ENCODE measurements at regions of chr11 and their contacts with region 1.

Region 1: DNA sequence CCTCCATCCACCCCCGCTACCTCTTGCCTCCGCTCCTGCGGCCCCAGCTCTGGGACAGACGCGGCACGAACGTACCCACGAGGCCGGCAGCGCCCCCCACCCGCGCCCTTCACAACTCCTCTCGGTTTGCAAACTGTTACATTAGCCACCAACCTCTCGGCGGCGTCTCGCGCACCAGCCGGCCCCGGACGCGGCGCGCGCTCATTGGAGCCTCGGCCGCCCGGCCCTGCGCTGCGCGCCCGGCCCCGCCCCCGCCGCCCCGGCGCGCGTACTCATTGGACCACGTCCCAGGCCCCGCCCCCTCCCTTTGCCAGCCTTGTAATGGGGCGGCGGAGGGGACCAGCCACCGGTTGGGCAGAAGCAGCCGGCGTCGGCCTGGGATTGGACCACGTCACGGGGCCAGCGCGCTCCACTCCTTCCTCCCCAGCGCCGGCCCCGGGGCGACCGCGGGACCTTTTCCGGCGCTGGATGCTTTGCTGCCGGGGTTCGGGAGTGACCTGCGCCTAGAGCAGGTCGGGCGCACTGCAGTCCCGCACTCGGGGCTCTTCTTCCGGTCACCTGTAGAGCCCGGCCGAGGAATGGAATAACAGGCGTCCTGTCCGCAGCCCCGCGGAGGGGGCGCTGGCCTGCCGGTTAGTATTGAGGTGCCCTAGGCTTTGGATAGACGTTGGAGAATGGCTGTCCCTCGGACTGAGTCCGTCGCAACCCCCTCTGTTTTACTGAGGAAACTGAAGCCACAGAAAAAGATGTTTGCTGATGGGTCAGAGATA is at the start of gene HYOU1:
- DNase-seq: peak; percentile 98
- H3K4me3 ChIP-seq: peak within 1 kb of the TSS; percentile 82 to 87
- H3K4me3 Mint-ChIP-seq: peak within 1 kb of the TSS; percentile 92 to 98 (median 97)
- H3K27ac ChIP-seq: peak within 1 kb of the TSS; percentile 91
- H3K27ac Mint-ChIP-seq: peak within 1 kb of the TSS; percentile 91 to 98 (median 97)
- H3K4me1 ChIP-seq: peaks cover 25% of the 10 kb centered on the region
- H3K4me1 Mint-ChIP-seq: peaks cover 20 to 52% (median 39%) of the 10 kb centered on the region in 4 donors
- H3K27me3 ChIP-seq: no peaks in the 10 kb centered on the region
- H3K27me3 Mint-ChIP-seq: no peaks in the 10 kb centered on the region
- total RNA-seq, gene HYOU1: 136 to 146 TPM

Region 2: GRCh38 chr11:118997627-118998387 is 59.4 kb before region 1 on chr11 and contains the start of gene CENATAC:
- CTCF ChIA-PET with region 1: no interaction called
- POLR2A ChIA-PET with region 1: interaction called, 9 read pairs
- intact Hi-C with region 1: loop called (anchors 1 kb)
- DNase-seq: peak; percentile 94 to 96 (median 95)
- H3K4me3 ChIP-seq: peak within 1 kb of the TSS; percentile 87 to 99
- H3K4me3 Mint-ChIP-seq: peak within 1 kb of the TSS; percentile 87 to 99 (median 98)
- H3K27ac ChIP-seq: peak within 1 kb of the TSS; percentile 75
- H3K27ac Mint-ChIP-seq: peak within 1 kb of the TSS; percentile 90 to 99 (median 95)
- H3K4me1 ChIP-seq: peaks cover 24% of the 10 kb centered on the region
- H3K4me1 Mint-ChIP-seq: peaks cover 18 to 52% (median 34%) of the 10 kb centered on the region in 4 donors
- H3K27me3 ChIP-seq: no peaks in the 10 kb centered on the region
- H3K27me3 Mint-ChIP-seq: no peaks in the 10 kb centered on the region
- total RNA-seq, gene CENATAC: 109 to 114 TPM

Region 3: DNA sequence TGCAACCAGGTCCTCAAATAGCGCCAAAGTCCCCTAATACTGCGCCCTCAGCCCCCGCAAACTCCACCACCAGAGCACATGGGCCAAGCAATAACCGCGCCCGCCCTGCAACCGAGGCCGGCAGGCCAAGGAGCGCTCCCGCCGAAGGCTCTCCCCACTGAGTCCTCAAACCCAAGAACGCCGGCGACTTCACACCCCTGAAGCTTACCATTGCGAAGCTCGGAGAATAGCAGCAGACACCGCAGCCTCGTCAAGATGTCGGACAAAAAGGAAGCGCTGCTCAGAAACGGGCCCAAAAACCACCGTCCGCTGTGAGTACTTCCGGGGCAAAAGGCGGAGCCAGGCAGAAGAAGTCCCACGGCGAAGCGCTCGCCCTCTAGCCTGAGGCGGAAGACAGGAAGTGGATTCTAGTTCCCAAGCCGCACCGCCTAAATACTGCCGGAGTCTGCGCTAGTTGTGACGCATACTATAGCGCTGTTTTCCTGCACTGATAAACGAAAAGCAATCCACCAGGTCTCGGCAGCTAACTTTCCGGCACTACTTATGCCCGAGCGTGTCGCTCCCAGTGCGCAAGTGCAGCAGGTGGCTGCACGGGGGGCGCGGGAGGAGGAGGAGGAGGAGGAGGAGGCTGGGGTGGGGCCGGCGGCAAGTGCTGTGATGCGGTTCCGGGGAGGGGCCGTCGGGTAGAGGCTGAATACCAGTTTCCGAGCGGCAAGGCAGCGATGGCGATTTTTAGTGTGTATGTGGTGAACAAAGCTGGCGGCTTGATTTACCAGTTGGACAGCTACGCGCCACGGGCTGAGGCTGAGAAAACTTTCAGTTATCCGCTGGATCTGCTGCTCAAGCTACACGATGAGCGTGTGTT is 38.9 kb before region 1 on chr11 and contains the starts of genes RPS25 and TRAPPC4:
- CTCF ChIA-PET with region 1: interaction called, 4 read pairs
- POLR2A ChIA-PET with region 1: interaction called, 32 read pairs
- intact Hi-C with region 1: loop called (anchors 1 kb)
- DNase-seq: peak; percentile 96 to 98 (median 97)
- H3K4me3 ChIP-seq: peak within 1 kb of the TSS; percentile 71 to 96
- H3K4me3 Mint-ChIP-seq: peak within 1 kb of the TSS; percentile 94 to 100 (median 99)
- H3K27ac ChIP-seq: peak within 1 kb of the TSS; percentile 87
- H3K27ac Mint-ChIP-seq: peak within 1 kb of the TSS; percentile 98 to 100 (median 100)
- H3K4me1 ChIP-seq: peaks cover 52% of the 10 kb centered on the region
- H3K4me1 Mint-ChIP-seq: peaks cover 21 to 73% (median 51%) of the 10 kb centered on the region in 4 donors
- H3K27me3 ChIP-seq: no peaks in the 10 kb centered on the region
- H3K27me3 Mint-ChIP-seq: no peaks in the 10 kb centered on the region
- total RNA-seq, gene RPS25: 2,545 to 2,705 TPM
- total RNA-seq, gene TRAPPC4: 89.2 to 97.3 TPM

Region 4: GRCh38 chr11:119030329-119031049 is 26.7 kb before region 1 on chr11 and contains the start of gene SLC37A4:
- CTCF ChIA-PET with region 1: interaction called, 7 read pairs
- POLR2A ChIA-PET with region 1: interaction called, 15 read pairs
- intact Hi-C with region 1: loop called (anchors 1 kb)
- DNase-seq: peak; percentile 98 to 99 (median 99)
- H3K4me3 ChIP-seq: peak within 1 kb of the TSS; percentile 61 to 91
- H3K4me3 Mint-ChIP-seq: peak within 1 kb of the TSS; percentile 78 to 91 (median 82)
- H3K27ac ChIP-seq: peak within 1 kb of the TSS; percentile 76
- H3K27ac Mint-ChIP-seq: peak within 1 kb of the TSS; percentile 64 to 95 (median 93)
- H3K4me1 ChIP-seq: peaks cover 19% of the 10 kb centered on the region
- H3K4me1 Mint-ChIP-seq: peaks cover 14 to 40% (median 19%) of the 10 kb centered on the region in 4 donors
- H3K27me3 ChIP-seq: no peaks in the 10 kb centered on the region
- H3K27me3 Mint-ChIP-seq: no peaks in the 10 kb centered on the region
- total RNA-seq, gene SLC37A4: 14.6 to 14.8 TPM

Region 5: DNA sequence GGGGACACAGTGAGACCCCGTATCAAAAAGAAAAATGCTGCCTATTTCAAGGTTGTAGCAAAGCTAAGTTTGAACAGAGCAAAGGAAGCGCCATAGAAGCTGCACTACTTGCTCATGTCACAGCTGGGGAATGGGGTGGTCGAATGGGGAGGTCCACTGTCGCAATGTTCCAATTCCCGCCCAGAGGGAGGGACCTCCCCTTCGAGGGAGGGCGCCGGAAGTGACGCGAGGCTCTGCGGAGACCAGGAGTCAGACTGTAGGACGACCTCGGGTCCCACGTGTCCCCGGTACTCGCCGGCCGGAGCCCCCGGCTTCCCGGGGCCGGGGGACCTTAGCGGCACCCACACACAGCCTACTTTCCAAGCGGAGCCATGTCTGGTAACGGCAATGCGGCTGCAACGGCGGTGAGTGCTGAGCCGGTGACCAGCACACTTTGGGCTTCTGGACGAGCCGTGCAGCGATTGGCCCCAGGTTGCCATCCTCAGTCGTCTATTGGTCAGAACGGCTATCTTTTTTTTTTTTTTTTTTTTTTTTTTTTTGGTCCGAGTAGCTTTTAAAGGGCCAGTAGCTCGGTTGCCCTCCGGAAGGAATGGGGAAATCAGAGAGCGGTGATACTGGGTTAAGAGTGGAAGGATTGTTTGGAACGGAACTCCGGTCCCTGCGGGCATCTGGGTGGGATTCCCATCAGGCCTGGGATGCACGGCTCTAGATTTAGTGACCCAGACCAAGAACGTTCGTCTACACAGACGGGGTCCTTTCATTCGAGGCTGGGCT is 27.7 kb after region 1 on chr11 and contains the start of gene HMBS:
- CTCF ChIA-PET with region 1: interaction called, 3 read pairs
- POLR2A ChIA-PET with region 1: interaction called, 12 read pairs
- intact Hi-C with region 1: no loop called
- DNase-seq: peak; percentile 88 to 93 (median 89)
- H3K4me3 ChIP-seq: peak within 1 kb of the TSS; percentile 83 to 90
- H3K4me3 Mint-ChIP-seq: peak within 1 kb of the TSS; percentile 92 to 96 (median 94)
- H3K27ac ChIP-seq: peak within 1 kb of the TSS; percentile 76
- H3K27ac Mint-ChIP-seq: peak within 1 kb of the TSS; percentile 93 to 98 (median 96)
- H3K4me1 ChIP-seq: peaks cover 13% of the 10 kb centered on the region
- H3K4me1 Mint-ChIP-seq: peaks cover 9 to 19% (median 14%) of the 10 kb centered on the region in 4 donors
- H3K27me3 ChIP-seq: no peaks in the 10 kb centered on the region
- H3K27me3 Mint-ChIP-seq: no peaks in the 10 kb centered on the region
- total RNA-seq, gene HMBS: 5.1 to 5.8 TPM

Measured in CD4-positive, alpha-beta memory T cell (primary cell).